GM12878 (cell line): ENCODE measurements at regions of chr12 and their contacts with region 1.

Region 1: DNA sequence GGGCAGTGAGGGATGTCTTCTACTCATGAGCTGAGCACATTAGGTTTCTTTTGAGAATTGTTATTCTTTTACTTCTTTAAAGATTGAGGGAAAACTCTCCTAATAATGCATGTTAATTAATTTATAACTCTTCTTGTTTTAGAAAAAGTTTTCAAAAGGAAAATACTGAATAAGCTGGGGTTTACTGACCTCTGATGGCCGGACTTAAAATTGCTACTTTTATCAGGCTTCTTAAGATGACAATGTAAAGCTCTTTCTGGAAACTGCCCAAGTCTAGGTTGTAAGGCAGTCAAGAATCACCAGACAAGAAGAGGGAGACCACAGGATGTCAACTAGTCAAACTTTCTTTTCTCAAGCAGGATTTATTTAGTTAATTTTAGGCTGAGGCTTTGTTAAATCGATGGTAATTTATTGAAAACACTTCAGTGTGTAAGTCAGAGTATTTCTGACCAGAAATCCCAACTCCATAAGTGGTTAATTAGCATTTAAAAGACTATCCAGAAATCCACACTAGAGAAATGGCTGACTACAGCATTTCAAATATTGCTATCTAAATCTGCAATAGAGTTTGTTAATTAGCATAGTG is 82.1 kb downstream of the AVPR1A start:
- DNase-seq: no peak
- ATAC-seq: peak; percentile 55; the same call in 2 of the 3 replicates
- H3K4me3 ChIP-seq: no peak overlapping the region
- H3K27ac ChIP-seq: no peak overlapping the region
- H3K4me1 ChIP-seq: no peaks in the 10 kb centered on the region
- H3K27me3 ChIP-seq: no peaks in the 10 kb centered on the region
- CTCF ChIP-seq: peak; percentile 33 to 48 (median 36); a peak in 3 of 6 replicates
- EP300 ChIP-seq: no peak
- POLR2A ChIP-seq: no peak
- RAD21 ChIP-seq: peak; percentile 59; the same call in 1 of the 2 replicates

Region 2: DNA sequence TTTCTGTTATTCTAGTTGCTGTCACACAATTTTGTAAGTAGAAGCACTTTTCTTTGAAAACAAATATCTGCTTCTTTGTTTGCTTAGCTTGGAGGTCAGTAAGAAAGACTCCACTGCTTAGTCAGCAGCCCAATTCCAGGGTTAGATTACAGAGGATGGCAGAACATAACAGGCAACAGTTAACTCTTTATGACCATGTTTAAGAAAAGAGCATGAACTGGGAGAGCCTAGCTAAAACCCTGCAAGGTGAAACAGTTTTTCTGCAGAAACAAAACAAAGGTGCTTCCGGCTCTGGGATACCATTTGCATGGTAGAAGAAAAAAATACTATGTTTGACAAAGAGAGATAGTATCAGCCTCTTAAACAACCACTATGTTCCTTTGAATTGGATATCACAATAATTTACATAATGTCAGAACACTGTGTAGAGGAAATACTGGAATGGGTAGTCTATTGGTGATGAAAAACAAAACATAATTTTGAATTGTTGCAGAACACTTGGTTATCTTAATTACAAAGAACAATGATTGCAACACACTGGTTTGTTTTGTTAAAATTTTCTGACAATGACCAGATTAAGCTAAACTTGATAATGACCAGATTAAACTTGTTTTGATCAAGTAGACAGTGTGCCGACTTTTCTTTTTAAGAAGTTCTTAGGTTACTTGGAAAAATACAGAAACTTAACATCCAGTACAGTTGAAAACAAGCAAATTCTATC is 111.6 kb before region 1 on chr12:
- CTCF ChIA-PET with region 1: no interaction called
- POLR2A ChIA-PET with region 1: no interaction called
- RAD21 ChIA-PET with region 1: no interaction called
- SMC1A ChIA-PET with region 1: no interaction called
- in situ Hi-C with region 1: no loop called
- intact Hi-C with region 1: no loop called
- DNase-seq: no peak
- ATAC-seq: no peak
- H3K4me3 ChIP-seq: no peak overlapping the region
- H3K27ac ChIP-seq: no peak overlapping the region
- H3K4me1 ChIP-seq: no peaks in the 10 kb centered on the region
- H3K27me3 ChIP-seq: no peaks in the 10 kb centered on the region
- CTCF ChIP-seq: no peak
- EP300 ChIP-seq: no peak
- POLR2A ChIP-seq: no peak
- RAD21 ChIP-seq: no peak

Region 3: GRCh38 chr12:63056649-63057048 is 12.3 kb before region 1 on chr12:
- CTCF ChIA-PET with region 1: interaction called, 11 read pairs
- POLR2A ChIA-PET with region 1: no interaction called
- RAD21 ChIA-PET with region 1: no interaction called
- SMC1A ChIA-PET with region 1: interaction called, 6 read pairs
- in situ Hi-C with region 1: no loop called
- intact Hi-C with region 1: no loop called
- DNase-seq: no peak
- ATAC-seq: no peak
- H3K4me3 ChIP-seq: no peak overlapping the region
- H3K27ac ChIP-seq: no peak overlapping the region
- H3K4me1 ChIP-seq: no peaks in the 10 kb centered on the region
- H3K27me3 ChIP-seq: no peaks in the 10 kb centered on the region
- CTCF ChIP-seq: no peak
- EP300 ChIP-seq: no peak
- POLR2A ChIP-seq: no peak
- RAD21 ChIP-seq: no peak